ENCODE measurements at regions of chr14 and their contacts with region 1.

Region 1: DNA sequence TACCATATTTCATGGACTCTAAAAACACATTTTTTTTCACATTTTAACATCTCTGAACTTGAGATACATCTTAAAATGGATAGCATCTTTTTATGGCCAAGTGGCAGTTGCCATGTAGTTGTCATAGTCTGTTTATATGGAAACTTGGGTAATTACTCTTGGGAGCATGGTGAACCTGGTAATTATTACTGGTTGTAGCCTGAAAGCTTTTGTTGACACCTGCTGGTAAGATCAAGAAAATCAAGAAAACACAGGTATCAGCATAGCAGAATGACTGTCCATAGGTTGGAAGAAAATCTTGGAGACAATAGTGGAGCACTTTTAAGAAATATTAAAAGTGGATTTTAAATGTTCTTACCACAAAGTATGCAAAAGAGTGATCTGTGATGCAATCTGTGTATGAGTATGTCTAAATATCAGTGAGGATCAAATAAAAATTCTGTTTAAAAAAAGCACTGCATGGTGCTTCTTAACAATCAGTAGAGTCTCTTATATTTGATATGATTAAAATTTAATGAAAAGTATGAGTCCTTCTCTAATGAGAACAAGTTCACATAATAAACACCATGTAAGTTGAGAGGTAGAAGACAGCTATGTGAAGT is 44.2 kb downstream of the TTC8 start:
- DNase-seq: no peak
- H3K4me3 ChIP-seq: no peak overlapping the region
- H3K27ac ChIP-seq: no peak overlapping the region
- H3K4me1 ChIP-seq: peaks cover 4 to 29% of the 10 kb centered on the region in 2 donors
- H3K27me3 ChIP-seq: no peaks in the 10 kb centered on the region
- CTCF ChIP-seq: peak in 5 of 6 experiments; percentile 11 to 48 (median 34)
- POLR2A ChIP-seq: no peak

Region 2: DNA sequence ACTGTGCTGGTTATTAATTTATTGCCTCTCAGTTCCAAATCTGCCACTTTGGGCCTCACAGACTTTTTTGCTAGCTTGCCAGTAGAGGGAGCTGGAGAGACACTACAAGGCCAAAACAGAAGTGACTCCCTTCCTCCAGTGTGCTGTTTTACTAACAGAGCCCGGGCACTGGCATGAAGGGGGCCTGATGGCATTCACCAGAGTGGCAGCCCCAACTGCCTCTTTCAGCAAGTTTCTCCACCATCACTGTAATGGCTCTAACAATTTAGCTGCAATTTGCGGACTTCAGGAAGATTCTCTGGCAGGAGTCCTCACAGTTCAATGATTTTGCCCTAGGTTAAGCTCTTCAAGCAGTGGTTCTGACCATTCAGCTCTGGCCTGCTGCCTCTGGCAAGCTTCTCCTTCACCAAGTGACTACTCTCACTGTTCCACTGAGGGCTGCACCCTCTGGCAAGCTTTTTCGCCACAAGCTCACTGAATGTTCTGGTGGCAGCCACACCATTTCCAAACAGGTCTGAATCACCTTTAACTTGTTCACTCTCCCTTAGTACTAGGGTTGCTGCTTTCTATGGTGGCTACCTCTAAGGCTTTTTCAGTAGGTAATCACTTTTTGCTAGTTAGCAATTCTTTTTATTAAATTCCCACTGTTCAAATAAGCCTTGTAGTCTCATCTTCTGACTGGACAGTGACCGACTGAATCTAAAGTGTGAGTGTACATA is 200.9 kb before region 1 on chr14:
- intact Hi-C with region 1: loop called in 1 of 2 experiments (anchors 10 kb)
- DNase-seq: peak; percentile 60 to 80 (median 68)
- H3K4me3 ChIP-seq: no peak overlapping the region
- H3K27ac ChIP-seq: no peak overlapping the region
- H3K4me1 ChIP-seq: peaks cover 5 to 7% of the 10 kb centered on the region in 2 donors
- H3K27me3 ChIP-seq: no peaks in the 10 kb centered on the region
- CTCF ChIP-seq: peak; percentile 67 to 88 (median 79)
- POLR2A ChIP-seq: no peak

Region 3: DNA sequence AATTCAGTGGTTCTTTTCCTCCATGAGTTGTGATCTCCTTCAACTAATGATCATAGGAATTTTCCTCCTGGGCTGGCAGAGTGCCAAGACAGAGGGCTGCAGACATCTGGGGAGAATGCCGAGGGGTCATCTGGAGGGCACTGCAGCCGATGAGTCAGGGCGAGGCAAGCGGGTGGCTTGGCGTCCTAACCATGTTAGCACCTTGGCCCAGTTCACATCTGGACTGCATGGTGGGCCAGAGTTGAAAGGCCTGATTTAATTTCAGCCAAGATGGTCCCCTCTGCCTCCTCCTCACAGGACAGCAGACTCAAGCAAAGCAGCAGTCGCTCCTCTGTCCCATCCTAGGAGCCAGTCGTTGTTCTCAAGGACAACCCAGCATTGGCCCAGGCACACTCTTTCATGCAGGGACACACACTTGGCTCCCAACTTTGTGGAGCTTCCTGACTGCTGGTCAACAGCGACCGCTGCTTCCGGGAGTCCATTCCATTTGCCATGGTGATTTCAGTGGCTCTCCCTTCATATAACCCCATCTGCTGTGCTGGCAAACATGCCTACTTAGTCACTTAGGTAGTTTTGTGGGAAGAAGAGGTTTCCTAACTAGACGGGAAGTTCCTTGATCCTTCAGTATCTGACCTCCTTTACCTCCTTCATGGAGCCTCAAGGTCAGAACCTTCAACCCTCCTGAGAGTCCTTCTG is 117.6 kb after region 1 on chr14:
- intact Hi-C with region 1: no loop called
- DNase-seq: peak; percentile 43 to 89 (median 78)
- H3K4me3 ChIP-seq: no peak overlapping the region
- H3K27ac ChIP-seq: peak overlapping the region in 1 of 5 donors; percentile 35
- H3K4me1 ChIP-seq: no peaks in the 10 kb centered on the region
- H3K27me3 ChIP-seq: no peaks in the 10 kb centered on the region
- CTCF ChIP-seq: no peak
- POLR2A ChIP-seq: no peak

Region 4: DNA sequence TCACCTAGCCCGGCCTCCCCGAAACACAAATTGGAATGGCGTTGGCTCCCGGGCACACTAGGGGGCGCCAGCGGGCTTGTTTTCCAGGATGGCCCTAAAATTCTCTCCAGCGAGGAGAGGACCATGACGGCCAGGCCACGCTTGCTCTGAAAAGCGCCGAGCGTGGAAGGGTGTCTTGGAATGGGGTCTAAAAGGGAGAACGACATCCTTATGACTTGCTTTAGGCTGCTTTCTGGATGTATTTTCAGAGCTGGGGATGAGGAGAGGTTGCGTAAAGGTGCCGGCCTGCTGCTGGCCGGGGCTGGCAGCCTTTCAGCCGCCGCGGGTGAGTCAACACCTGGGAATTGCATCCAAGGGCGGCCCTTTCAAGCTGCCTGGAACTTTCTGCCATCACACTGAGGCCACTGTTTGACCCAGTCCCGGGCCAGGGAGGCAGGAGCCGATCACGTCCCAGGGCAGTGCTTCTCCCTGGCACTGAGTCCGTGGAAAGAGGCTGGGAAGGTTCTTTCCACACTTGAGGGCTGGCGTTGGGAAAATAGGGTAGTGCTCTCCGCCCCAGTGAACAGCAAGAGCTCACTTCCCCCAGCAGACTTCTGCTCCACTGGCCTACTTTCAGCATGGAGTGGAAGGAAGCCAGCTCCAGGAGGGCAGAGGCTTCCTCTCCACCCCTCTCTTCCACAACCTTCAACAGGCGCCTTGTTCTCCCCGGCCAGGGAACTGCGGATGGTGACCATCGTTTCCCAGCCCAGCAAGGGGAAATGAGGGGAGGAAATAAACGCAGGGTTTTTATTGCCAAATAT is 172.0 kb after region 1 on chr14:
- intact Hi-C with region 1: no loop called
- DNase-seq: peak; percentile 91 to 96 (median 95)
- H3K4me3 ChIP-seq: peak overlapping the region in 2 of 4 donors; percentile 6 to 49
- H3K27ac ChIP-seq: peak overlapping the region; percentile 32 to 94 (median 82)
- H3K4me1 ChIP-seq: peaks cover 8 to 9% of the 10 kb centered on the region in 2 donors
- H3K27me3 ChIP-seq: no peaks in the 10 kb centered on the region
- CTCF ChIP-seq: peak; percentile 87 to 98 (median 96)
- POLR2A ChIP-seq: peak; percentile 22 to 74

Measured in adrenal gland (tissue), 19 donors.